ENCODE measurements at regions of chr9 and their contacts with region 1.

Region 1: DNA sequence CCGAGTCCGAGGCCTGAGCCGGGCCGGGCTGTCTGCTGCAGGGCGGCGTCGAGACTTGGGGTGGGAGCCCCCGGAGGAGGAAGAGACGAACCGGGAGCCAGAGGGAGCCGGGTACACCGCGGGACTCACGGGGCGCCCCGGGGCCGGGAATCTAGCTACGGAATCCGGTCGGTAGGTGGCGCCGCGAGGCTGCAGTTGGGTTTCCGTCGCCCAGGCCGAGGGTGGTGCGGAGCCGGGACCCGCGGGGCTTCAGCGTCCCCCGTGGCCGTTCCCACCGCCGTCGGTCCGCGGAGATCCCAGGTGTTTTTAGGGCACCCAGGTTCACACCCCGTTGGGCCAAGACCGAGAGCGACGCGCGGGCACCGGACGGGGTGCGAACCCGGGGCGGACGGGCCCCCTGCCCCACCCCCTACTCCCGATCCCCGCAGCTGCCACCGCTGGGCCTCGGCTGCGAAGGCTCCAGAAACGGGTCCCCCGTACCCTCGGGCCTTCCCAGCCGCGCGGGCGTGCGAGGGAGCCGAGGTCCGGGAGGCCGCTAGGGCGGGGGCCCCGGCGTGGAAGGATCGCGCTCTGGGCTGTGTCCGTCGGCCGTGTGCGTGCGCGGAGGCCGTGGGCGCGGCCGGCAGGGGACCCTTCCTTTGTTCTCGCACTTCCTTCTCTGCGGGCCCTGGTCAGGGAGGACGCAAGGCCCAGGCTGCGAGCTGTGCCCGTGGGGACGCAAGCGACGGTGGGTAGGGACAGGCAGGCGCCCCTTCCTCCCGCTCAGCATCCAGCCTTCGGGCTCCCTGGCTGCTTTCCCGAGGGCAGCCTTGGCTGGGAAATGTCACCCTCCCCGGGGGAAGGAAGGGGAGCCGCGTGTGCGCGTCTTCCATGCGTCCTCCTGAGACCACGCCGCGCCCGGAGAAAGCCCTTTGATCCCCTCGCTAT is 146.6 kb downstream of the GAPVD1 start:
- DNase-seq: peak; percentile 20 to 80
- H3K4me3 ChIP-seq: peak overlapping the region; percentile 60 to 68 (median 63)
- H3K27ac ChIP-seq: no peak overlapping the region
- H3K4me1 ChIP-seq: no peaks in the 10 kb centered on the region
- H3K27me3 ChIP-seq: no peaks in the 10 kb centered on the region
- CTCF ChIP-seq: peak; percentile 25 to 81 (median 61)
- POLR2A ChIP-seq: no peak

Region 2: DNA sequence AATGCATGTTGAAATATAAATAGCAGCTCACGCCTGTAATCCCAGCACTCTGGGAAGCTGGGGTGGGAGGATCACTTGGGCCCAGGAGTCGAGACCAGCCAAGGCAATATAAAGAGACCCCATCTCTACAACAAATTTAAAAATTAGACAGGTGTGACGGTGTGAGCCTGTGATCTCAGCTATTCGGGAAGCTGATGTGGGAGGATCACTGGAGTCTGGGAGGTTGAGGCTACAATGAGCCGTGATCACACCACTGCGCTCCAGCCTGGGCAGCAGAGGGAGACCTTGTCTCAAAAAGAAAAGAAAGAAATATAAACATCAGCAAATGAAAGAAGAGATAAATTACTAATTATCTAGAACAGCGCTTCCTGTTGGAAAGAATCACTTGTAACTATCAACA is 193.7 kb after region 1 on chr9:
- intact Hi-C with region 1: loop called (anchors 5 kb)
- DNase-seq: no peak
- H3K4me3 ChIP-seq: no peak overlapping the region
- H3K27ac ChIP-seq: no peak overlapping the region
- H3K4me1 ChIP-seq: no peaks in the 10 kb centered on the region
- H3K27me3 ChIP-seq: no peaks in the 10 kb centered on the region
- CTCF ChIP-seq: no peak
- POLR2A ChIP-seq: no peak

Region 3: DNA sequence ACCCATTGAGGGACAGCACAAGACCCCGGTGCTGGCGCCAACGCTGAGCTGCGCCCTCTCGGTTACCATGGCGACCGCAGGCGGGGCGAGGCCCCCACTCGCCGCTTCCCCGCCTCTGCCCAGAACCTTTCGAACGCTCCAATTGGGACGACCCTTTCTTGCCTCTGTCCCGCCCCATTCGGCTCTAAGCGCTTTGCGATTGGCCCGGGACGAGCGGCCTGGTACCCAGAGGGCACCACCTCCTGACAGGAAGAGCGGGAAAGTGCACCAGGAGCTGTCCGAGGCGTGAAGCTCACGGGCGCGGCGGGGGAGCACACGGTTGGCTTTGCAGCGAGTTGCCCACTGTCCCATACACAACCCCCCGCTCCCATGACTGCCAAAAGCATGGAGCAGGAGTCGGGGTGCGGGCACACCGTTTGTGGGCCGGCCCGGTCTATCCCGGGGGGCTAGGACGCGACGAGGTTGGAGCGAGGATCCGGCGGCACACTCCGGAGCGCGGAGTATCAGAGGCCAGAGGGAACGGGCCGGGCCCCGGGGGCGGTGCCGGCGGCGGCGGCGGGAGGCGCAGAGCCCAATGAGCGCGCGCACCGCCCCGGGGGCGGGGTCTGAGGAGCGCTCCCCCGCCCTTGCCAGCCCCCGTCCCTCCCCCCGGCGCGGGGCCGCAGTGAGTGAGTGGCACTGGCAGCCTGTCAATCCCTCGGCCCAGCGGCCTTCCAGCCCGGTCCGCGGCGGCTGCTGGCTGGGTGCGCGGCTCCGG is 338.0 kb after region 1 on chr9:
- intact Hi-C with region 1: loop called (anchors 5 kb)
- DNase-seq: peak; percentile 90 to 91
- H3K4me3 ChIP-seq: peak overlapping the region; percentile 73 to 92 (median 82)
- H3K27ac ChIP-seq: peak overlapping the region; percentile 83 to 96
- H3K4me1 ChIP-seq: no peaks in the 10 kb centered on the region
- H3K27me3 ChIP-seq: no peaks in the 10 kb centered on the region
- CTCF ChIP-seq: no peak
- POLR2A ChIP-seq: no peak

Region 4: GRCh38 chr9:126293522-126293889 is 885.3 kb after region 1 on chr9:
- intact Hi-C with region 1: no loop called
- DNase-seq: no peak
- H3K4me3 ChIP-seq: no peak overlapping the region
- H3K27ac ChIP-seq: no peak overlapping the region
- H3K4me1 ChIP-seq: no peaks in the 10 kb centered on the region
- H3K27me3 ChIP-seq: no peaks in the 10 kb centered on the region
- CTCF ChIP-seq: no peak
- POLR2A ChIP-seq: no peak